ENCODE measurements at regions of chr15 and their contacts with region 1.

Region 1: DNA sequence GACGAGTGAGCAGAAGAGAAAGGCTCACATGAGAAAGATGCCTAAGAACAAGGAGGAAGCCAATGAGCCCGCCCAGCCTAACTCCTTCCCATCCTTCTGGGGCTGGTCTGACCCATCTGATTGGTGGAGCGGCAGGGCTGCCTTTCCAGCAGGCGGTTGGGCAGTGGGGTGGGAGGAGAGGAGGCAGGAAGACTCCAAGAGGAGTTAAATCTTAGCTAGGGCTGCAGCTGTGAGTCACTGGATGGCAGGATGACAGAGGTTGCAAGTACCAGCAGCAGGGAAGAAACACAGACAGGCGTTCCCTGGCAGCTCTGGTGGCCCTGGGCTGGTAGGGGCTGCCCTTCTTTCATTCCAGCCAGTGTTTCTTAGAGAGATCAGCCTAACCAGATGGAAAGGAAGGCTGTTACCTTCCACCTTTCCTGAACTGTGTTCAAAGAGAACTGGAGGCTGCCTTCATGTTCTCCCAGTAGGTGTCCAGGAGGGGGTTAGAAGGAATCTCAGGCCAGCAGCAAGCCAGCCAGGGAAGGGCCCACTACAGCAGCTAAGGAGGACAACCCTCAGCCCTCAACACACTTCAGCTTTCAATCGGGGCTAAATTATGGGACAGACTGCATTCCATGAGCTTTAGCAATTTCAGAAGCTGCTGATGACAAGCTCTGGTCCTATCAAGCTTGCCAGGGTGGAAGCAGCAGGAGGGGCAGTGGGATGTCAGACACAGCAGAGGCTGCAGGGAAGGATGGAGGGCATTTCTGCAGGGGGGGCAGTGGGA is 50.3 kb downstream of the CHSY1 start:
- DNase-seq: peak; percentile 82 to 91 (median 85)
- H3K4me3 ChIP-seq: peak overlapping the region in 1 of 3 experiments; percentile 30
- H3K4me3 Mint-ChIP-seq: peak overlapping the region in 1 of 2 donors; percentile 26
- H3K27ac ChIP-seq: peak overlapping the region; percentile 62 to 87
- H3K27ac Mint-ChIP-seq: peak overlapping the region; percentile 81 to 93 (median 90)
- H3K4me1 ChIP-seq: peaks cover 68 to 80% of the 10 kb centered on the region in 2 donors
- H3K4me1 Mint-ChIP-seq: peaks cover 75% of the 10 kb centered on the region
- H3K27me3 ChIP-seq: no peaks in the 10 kb centered on the region
- H3K27me3 Mint-ChIP-seq: peaks cover 0 to 2% (median 0%) of the 10 kb centered on the region in 3 donors
- CTCF ChIP-seq: no peak

Region 2: DNA sequence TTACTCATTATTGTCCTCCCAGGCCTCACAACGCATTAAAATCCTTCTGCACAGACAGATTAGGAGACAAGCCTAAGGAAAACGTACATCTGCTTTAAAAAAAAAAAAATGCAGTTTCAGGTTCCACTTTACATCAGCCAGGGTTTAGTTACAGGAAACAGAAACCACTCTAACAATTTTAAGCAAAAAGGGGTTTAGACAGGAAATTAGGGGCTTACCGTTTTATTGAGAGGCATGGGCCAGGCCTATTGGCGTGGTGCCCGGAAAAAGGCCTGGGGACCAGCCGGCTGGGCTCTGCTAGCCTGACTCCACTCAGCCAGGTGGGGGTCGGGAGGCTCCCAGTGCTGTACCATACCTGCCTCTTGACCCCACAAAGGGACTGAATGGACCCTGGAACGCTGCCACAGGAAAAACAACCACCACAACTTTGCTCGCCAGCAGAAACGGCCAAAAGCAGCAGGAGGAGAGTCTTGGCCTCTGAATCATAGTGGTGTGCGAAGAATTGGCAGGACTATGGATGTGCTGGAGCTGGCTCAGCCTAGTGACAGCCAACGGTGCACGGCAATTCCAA is 74.0 kb before region 1 on chr15:
- intact Hi-C with region 1: loop called in 1 of 2 experiments (anchors 5 kb)
- DNase-seq: peak in 2 of 3 donors; percentile 25 to 40
- H3K4me3 ChIP-seq: peak overlapping the region in 1 of 3 experiments; percentile 30
- H3K4me3 Mint-ChIP-seq: peak overlapping the region; percentile 59 to 71
- H3K27ac ChIP-seq: peak overlapping the region; percentile 57 to 71
- H3K27ac Mint-ChIP-seq: peak overlapping the region; percentile 11 to 91 (median 88)
- H3K4me1 ChIP-seq: peaks cover 83 to 93% of the 10 kb centered on the region in 2 donors
- H3K4me1 Mint-ChIP-seq: peaks cover 85% of the 10 kb centered on the region
- H3K27me3 ChIP-seq: no peaks in the 10 kb centered on the region
- H3K27me3 Mint-ChIP-seq: peaks cover 0 to 1% (median 0%) of the 10 kb centered on the region in 3 donors
- CTCF ChIP-seq: no peak

Region 3: GRCh38 chr15:101242160-101242998 is 40.8 kb after region 1 on chr15:
- intact Hi-C with region 1: loop called in 1 of 2 experiments (anchors 5 kb)
- DNase-seq: peak; percentile 85 to 91 (median 87)
- H3K4me3 ChIP-seq: peak overlapping the region in 2 of 3 experiments; percentile 33 to 69
- H3K4me3 Mint-ChIP-seq: peak overlapping the region; percentile 70 to 76
- H3K27ac ChIP-seq: peak overlapping the region; percentile 87
- H3K27ac Mint-ChIP-seq: peak overlapping the region; percentile 89 to 97 (median 96)
- H3K4me1 ChIP-seq: peaks cover 99 to 100% of the 10 kb centered on the region in 2 donors
- H3K4me1 Mint-ChIP-seq: peaks cover 96% of the 10 kb centered on the region
- H3K27me3 ChIP-seq: no peaks in the 10 kb centered on the region
- H3K27me3 Mint-ChIP-seq: peaks cover 0 to 2% (median 0%) of the 10 kb centered on the region in 3 donors
- CTCF ChIP-seq: no peak

Measured in CD14-positive monocyte (primary cell).